ENCODE measurements at regions of chr7 and their contacts with region 1.

Region 1: DNA sequence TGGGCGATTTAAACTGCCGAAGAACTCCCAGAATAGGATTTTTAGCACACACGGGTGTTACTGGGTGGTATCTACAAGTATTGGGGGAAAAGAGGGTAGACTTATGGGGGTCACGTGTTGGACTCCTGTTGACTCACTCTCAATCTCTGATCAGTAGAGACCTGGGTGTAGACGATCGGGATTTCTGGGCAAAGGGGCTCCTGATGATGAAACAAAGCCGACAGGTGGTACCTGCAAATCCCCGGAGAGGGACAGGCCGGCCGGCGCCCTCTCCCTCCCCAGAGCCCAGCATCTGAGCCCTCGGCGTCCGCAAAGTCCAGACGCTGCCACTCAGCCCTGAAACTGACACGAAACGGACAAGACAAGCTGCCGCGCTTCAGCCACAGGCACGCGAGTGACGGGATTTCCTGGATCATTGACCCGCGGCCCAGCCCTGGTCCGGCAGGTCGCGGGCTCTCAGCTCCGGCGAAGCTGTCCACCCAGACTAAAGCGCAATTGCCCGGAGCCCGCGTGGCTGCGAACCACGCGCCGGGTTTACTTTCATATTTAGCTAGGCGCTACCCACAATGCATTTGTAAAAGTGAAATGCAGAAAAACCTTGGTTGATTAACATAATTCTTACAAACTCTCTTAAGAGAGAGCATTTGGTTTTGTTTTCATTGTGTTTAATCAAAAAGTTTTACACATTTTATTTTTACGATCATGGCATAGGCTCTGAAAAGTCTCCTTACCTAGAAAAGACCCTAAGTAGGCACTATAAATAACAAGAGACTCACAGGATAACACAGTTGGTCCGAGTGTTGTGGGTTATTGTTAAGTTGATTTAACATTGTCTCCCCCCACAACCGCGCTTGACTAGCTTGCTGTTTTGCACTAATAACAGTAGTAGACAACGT is 56.9 kb upstream of the EZH2 start:
- DNase-seq: peak; percentile 89
- H3K4me3 ChIP-seq: peak overlapping the region; percentile 84 to 97
- H3K27ac ChIP-seq: peak overlapping the region; percentile 95 to 96
- H3K4me1 ChIP-seq: peaks cover 6% of the 10 kb centered on the region
- H3K27me3 ChIP-seq: no peaks in the 10 kb centered on the region
- CTCF ChIP-seq: no peak
- POLR2A ChIP-seq: no peak

Region 2: DNA sequence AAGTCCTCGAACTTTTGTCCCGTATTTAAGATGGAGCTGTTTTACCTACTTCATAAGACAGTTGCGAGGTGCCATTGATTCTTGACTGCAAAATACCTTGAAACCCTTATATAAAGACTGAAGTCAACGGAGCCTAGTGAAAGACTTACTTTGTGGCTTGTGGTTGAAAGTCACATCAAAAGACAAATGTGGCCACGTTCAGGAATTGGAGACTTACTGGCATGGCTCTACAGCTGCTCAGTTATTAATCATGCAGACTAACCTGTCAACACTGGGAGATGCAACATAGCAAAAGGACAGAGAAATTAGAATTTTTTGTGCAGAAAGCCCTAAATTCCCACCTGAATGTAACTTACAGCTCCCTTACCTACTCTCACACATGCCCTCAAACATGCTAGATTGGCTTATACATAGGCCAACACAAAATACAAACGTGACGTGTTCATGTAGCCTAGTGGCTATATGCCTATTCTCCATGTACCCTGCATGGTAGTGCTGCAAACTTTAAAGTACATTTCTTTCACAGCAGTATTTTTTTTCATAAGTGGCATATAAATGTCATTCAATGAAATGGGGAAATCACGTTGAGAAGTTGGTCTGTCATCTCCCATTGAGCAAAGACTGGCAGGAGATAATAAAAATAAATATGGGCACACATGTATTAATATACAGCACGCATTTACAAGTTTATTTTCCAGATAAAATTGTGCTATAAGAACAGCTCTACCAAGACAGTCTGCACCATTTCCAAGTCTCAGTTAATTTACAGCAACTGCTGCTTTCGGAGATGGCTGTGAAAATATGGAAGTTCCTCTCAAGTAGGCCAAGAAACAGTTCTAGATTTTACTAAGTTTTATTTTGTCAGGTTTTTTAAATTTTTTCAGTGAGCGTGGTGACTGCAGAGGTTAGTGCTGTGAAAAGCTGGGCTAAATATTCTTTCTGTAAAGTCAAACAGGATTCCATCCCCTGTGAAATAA is 520.8 kb before region 1 on chr7:
- intact Hi-C with region 1: no loop called
- DNase-seq: no peak
- H3K4me3 ChIP-seq: no peak overlapping the region
- H3K27ac ChIP-seq: no peak overlapping the region
- H3K4me1 ChIP-seq: no peaks in the 10 kb centered on the region
- H3K27me3 ChIP-seq: no peaks in the 10 kb centered on the region
- CTCF ChIP-seq: no peak
- POLR2A ChIP-seq: no peak

Region 3: DNA sequence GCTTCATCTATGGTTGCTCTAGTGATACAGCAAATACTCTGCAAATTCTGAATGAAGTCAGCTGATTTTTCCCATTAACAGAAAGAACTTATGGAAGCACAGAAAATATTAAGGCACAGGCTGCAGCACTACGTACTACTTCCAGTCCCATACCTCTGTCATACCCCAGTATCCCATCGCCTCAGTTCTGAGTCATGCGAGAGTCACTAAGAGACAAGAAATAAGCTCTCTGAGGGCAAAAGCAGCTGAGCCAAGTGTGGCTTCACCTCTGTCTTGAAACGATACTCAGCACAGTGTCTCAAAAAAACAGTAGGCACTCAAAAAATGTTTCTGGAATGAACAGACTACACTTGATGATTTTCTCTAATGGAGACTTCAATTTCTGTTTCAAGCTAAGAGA is 105.1 kb before region 1 on chr7:
- intact Hi-C with region 1: no loop called
- DNase-seq: no peak
- H3K4me3 ChIP-seq: no peak overlapping the region
- H3K27ac ChIP-seq: no peak overlapping the region
- H3K4me1 ChIP-seq: no peaks in the 10 kb centered on the region
- H3K27me3 ChIP-seq: no peaks in the 10 kb centered on the region
- CTCF ChIP-seq: no peak
- POLR2A ChIP-seq: no peak

Region 4: GRCh38 chr7:148849393-148850098 is 91.4 kb before region 1 on chr7:
- intact Hi-C with region 1: no loop called
- DNase-seq: no peak
- H3K4me3 ChIP-seq: no peak overlapping the region
- H3K27ac ChIP-seq: no peak overlapping the region
- H3K4me1 ChIP-seq: no peaks in the 10 kb centered on the region
- H3K27me3 ChIP-seq: no peaks in the 10 kb centered on the region
- CTCF ChIP-seq: no peak
- POLR2A ChIP-seq: no peak

Region 5: GRCh38 chr7:148884299-148885022 is 56.5 kb before region 1 on chr7:
- intact Hi-C with region 1: loop called (anchors 10 kb)
- DNase-seq: peak; percentile 92
- H3K4me3 ChIP-seq: peak overlapping the region; percentile 94 to 95
- H3K27ac ChIP-seq: peak overlapping the region; percentile 97
- H3K4me1 ChIP-seq: no peaks in the 10 kb centered on the region
- H3K27me3 ChIP-seq: no peaks in the 10 kb centered on the region
- CTCF ChIP-seq: no peak
- POLR2A ChIP-seq: no peak

Measured in testis (tissue), 5 donors.